ENCODE measurements at regions of chr11 and their contacts with region 1.

Region 1: GRCh38 chr11:114180301-114181055 is 115.7 kb upstream of the NNMT start:
- DNase-seq: peak; percentile 74
- H3K4me3 ChIP-seq: no peak overlapping the region
- H3K27ac ChIP-seq: no peak overlapping the region
- H3K4me1 ChIP-seq: peaks cover 33% of the 10 kb centered on the region
- CTCF ChIP-seq: peak; percentile 84

Region 2: DNA sequence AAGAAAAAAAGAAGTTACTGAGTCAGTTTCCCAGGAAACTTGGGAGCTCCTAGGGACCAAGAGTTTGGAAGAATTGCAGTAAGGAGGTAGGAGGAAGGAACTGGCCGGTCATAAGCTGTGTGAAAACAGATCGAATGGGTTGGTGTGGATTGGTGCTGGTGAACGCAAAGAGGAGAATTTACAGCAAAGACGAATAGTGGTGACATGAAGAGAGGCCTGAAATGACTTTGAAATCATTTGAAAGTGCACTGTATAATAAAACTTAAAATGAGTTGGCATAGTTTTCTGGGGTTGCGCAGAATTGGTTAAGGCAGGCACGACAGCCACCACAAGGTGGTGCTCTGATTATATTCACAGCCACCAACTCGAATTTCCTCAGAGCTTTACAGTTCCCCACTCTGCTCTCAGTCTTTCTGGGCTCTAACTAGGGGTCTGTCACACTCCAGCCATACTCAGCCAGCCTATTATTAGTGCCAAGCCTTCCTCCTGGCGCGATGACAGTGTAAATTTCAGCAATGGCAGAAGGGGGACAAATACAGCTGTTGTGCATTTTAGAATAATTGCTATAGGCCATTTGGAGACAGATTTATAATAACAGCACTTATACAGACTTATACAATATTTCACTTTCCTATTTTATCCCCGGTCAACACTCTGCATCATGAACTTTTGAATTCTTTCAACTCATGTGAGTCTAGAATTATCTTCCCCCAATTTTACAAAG is 284.2 kb before region 1 on chr11:
- CTCF ChIA-PET with region 1: interaction called, 4 read pairs
- POLR2A ChIA-PET with region 1: interaction called, 3 read pairs
- intact Hi-C with region 1: loop called (anchors 1 kb)
- DNase-seq: peak; percentile 48
- H3K4me3 ChIP-seq: no peak overlapping the region
- H3K27ac ChIP-seq: no peak overlapping the region
- H3K4me1 ChIP-seq: no peaks in the 10 kb centered on the region
- CTCF ChIP-seq: peak; percentile 92

Region 3: DNA sequence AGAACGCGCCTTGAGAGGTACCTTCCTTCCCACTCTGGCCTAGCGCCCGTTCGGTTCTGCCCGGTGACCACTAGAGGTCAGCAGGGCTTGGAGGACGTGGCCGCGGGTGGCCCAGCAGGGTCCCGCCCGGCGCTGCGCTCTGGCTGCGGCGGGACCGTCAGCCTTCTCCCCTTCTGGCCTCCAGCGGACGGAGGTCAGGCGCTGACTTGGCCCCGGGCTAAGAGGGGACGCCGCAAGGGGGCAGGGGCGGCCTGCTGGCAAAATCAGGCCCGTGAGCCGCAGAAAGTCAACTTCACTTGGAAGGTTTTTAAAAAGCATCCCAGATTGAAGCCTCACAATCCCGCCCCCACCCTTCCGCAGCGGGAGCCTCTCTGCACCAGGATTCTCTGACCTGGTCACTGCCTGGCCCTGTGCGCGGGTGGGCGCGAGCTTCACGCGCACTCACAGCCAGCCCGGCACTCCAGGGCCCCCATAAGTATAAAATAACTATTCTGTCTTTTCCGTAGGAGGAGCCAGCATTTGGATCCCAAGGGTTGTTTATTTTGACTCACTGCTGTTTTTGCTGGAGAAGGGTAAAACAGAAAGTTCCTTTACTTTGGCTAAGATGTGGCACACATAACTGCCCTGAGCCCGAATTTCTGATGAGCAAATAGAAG is 144.2 kb before region 1 on chr11:
- CTCF ChIA-PET with region 1: no interaction called
- POLR2A ChIA-PET with region 1: no interaction called
- intact Hi-C with region 1: loop called (anchors 2 kb)
- DNase-seq: peak; percentile 26
- H3K4me3 ChIP-seq: no peak overlapping the region
- H3K27ac ChIP-seq: no peak overlapping the region
- H3K4me1 ChIP-seq: no peaks in the 10 kb centered on the region
- CTCF ChIP-seq: peak; percentile 58

Region 4: GRCh38 chr11:114136686-114137640 is 43.5 kb before region 1 on chr11:
- CTCF ChIA-PET with region 1: no interaction called
- POLR2A ChIA-PET with region 1: no interaction called
- intact Hi-C with region 1: no loop called
- DNase-seq: no peak
- H3K4me3 ChIP-seq: no peak overlapping the region
- H3K27ac ChIP-seq: no peak overlapping the region
- H3K4me1 ChIP-seq: no peaks in the 10 kb centered on the region
- CTCF ChIP-seq: no peak